HCT116 (cell line): ENCODE measurements at regions of chr10 and their contacts with region 1.

Region 1: GRCh38 chr10:23158370-23158769 is 33.7 kb upstream of the PTF1A start:
- DNase-seq: peak; percentile 47
- ATAC-seq: peak; percentile 92
- H3K4me3 ChIP-seq: no peak overlapping the region
- H3K27ac ChIP-seq: no peak overlapping the region
- H3K4me1 ChIP-seq: peaks cover 0 to 10% of the 10 kb centered on the region in 2 experiments; a peak in 2 of 4 replicates
- H3K27me3 ChIP-seq: peaks cover 4% of the 10 kb centered on the region; the same call in 1 of the 2 replicates
- CTCF ChIP-seq: peak; percentile 71 to 84 (median 83)
- POLR2A ChIP-seq: no peak
- RAD21 ChIP-seq: peak; percentile 85

Region 2: DNA sequence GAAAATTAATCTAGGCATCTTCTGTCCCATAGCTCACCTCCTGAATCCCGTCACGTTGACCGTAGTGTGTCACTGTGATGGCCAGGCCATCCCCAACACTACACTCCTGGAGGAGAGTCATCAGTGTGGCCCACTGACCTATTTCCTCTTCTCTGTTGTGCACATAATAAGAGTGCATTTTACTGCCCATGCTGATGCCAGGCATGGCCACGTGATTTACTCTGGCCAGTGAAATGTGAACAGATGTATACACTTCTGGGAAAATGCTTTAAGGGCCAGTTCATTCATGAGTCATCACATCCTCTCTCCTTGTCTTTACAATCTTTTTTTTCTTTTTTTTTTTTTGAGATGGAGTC is 342.1 kb before region 1 on chr10:
- CTCF ChIA-PET with region 1: no interaction called
- POLR2A ChIA-PET with region 1: no interaction called
- RAD21 ChIA-PET with region 1: no interaction called
- intact Hi-C with region 1: no loop called
- DNase-seq: peak; percentile 89
- ATAC-seq: peak; percentile 80
- H3K4me3 ChIP-seq: peak overlapping the region in 1 of 2 experiments; percentile 30; a peak in 2 of 4 replicates
- H3K27ac ChIP-seq: peak overlapping the region; percentile 85
- H3K4me1 ChIP-seq: peaks cover 19 to 38% of the 10 kb centered on the region in 2 experiments
- H3K27me3 ChIP-seq: no peaks in the 10 kb centered on the region
- CTCF ChIP-seq: no peak
- POLR2A ChIP-seq: no peak
- RAD21 ChIP-seq: no peak; the same call in 1 of the 2 replicates

Region 3: GRCh38 chr10:22900841-22901601 is 257.3 kb before region 1 on chr10:
- CTCF ChIA-PET with region 1: no interaction called
- POLR2A ChIA-PET with region 1: no interaction called
- RAD21 ChIA-PET with region 1: no interaction called
- intact Hi-C with region 1: no loop called
- DNase-seq: no peak
- ATAC-seq: no peak
- H3K4me3 ChIP-seq: no peak overlapping the region
- H3K27ac ChIP-seq: no peak overlapping the region
- H3K4me1 ChIP-seq: no peaks in the 10 kb centered on the region
- H3K27me3 ChIP-seq: no peaks in the 10 kb centered on the region
- CTCF ChIP-seq: no peak
- POLR2A ChIP-seq: no peak
- RAD21 ChIP-seq: no peak

Region 4: DNA sequence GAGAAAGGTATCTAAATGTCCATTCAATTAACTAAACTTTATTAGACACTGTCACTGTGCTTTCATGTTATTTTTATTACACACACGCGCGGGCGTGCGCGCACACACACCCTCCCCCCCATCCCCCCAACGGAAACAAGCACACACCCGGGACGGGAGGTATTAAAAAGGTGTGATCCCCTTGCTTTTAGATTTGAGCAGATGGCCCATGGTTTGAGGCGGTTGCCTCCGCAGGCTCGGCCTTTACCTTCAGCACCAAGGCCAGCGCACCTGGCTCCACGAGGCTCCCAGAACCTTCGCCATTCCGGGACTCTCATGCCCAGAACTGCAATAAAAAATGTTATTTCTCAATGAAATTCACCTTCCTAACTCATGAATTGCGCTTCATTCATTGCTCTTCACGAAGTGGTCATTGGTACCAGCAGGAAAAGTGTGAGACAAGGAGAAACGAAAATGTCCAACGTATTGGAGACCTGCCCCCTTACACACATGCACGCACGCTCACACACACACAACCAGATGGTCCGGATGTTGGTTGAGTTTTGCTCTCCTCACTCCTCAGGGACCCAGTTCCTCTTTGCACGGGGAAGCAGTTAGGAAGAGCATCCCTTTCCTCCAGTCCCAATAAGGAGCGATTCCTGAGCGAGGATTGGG is 13.0 kb after region 1 on chr10:
- CTCF ChIA-PET with region 1: interaction called, 10 read pairs
- POLR2A ChIA-PET with region 1: no interaction called
- RAD21 ChIA-PET with region 1: no interaction called
- intact Hi-C with region 1: no loop called
- DNase-seq: no peak
- ATAC-seq: no peak
- H3K4me3 ChIP-seq: no peak overlapping the region
- H3K27ac ChIP-seq: no peak overlapping the region
- H3K4me1 ChIP-seq: no peaks in the 10 kb centered on the region
- H3K27me3 ChIP-seq: peaks cover 21% of the 10 kb centered on the region
- CTCF ChIP-seq: no peak
- POLR2A ChIP-seq: no peak
- RAD21 ChIP-seq: no peak

Region 5: GRCh38 chr10:23314835-23315239 is 156.5 kb after region 1 on chr10:
- CTCF ChIA-PET with region 1: interaction called, 9 read pairs
- POLR2A ChIA-PET with region 1: no interaction called
- RAD21 ChIA-PET with region 1: interaction called in 1 of 2 experiments, 4 read pairs
- intact Hi-C with region 1: loop called (anchors 5 kb)
- DNase-seq: peak; percentile 57
- ATAC-seq: peak; percentile 63; the same call in 1 of the 2 replicates
- H3K4me3 ChIP-seq: no peak overlapping the region
- H3K27ac ChIP-seq: no peak overlapping the region
- H3K4me1 ChIP-seq: no peaks in the 10 kb centered on the region
- H3K27me3 ChIP-seq: peaks cover 15% of the 10 kb centered on the region
- CTCF ChIP-seq: peak; percentile 45 to 72 (median 66); a peak in 5 of 6 replicates
- POLR2A ChIP-seq: no peak
- RAD21 ChIP-seq: peak; percentile 80

Region 6: DNA sequence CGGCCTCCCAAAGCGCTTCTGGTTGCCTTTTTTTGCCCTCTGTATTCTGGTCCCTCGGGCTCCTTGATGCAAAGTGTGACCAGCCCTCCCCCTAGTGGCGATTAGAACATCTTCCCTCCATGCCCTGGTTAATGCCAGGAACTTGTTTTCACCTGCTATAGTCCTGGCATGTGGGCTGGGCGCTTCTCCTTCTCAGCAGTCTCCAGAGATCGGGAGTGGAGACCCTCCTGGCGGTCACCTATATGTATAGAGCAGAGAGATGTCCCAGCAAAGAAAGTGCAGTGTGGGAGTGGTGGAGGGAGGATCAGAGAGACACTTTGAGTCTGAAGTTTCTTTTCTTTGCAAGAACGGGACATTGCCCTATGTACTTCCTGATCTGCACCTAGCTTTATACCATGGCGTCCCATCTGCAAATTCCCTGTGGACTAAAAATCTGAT is 544.6 kb after region 1 on chr10:
- CTCF ChIA-PET with region 1: no interaction called
- POLR2A ChIA-PET with region 1: no interaction called
- RAD21 ChIA-PET with region 1: no interaction called
- intact Hi-C with region 1: loop called (anchors 1 kb)
- DNase-seq: peak; percentile 70
- ATAC-seq: peak; percentile 99
- H3K4me3 ChIP-seq: no peak overlapping the region
- H3K27ac ChIP-seq: no peak overlapping the region
- H3K4me1 ChIP-seq: no peaks in the 10 kb centered on the region
- H3K27me3 ChIP-seq: no peaks in the 10 kb centered on the region
- CTCF ChIP-seq: peak; percentile 65 to 73 (median 69)
- POLR2A ChIP-seq: no peak
- RAD21 ChIP-seq: peak; percentile 72

Region 7: DNA sequence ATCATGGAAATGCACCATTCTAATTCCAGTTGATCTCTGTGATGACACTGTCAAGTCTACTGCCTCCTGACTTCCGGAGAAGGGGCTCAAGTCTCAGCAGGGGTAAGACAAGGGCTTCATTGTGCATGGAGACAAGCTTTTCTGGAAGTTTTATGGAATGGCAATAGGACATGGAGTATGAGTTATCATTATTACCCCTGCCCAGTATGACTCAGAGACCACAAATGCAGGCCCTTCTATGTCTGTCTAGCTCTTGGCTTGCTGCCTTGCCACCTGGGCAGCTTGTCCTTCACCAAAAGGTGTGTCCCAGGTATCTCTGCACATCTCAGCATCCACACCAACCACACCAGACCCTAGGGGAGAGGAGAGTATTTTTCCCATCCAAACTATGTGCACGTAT is 1015.6 kb after region 1 on chr10:
- CTCF ChIA-PET with region 1: no interaction called
- POLR2A ChIA-PET with region 1: no interaction called
- RAD21 ChIA-PET with region 1: no interaction called
- intact Hi-C with region 1: no loop called
- DNase-seq: no peak
- ATAC-seq: no peak
- H3K4me3 ChIP-seq: no peak overlapping the region
- H3K27ac ChIP-seq: no peak overlapping the region
- H3K4me1 ChIP-seq: no peaks in the 10 kb centered on the region
- H3K27me3 ChIP-seq: no peaks in the 10 kb centered on the region
- CTCF ChIP-seq: no peak
- POLR2A ChIP-seq: no peak
- RAD21 ChIP-seq: no peak

Region 8: DNA sequence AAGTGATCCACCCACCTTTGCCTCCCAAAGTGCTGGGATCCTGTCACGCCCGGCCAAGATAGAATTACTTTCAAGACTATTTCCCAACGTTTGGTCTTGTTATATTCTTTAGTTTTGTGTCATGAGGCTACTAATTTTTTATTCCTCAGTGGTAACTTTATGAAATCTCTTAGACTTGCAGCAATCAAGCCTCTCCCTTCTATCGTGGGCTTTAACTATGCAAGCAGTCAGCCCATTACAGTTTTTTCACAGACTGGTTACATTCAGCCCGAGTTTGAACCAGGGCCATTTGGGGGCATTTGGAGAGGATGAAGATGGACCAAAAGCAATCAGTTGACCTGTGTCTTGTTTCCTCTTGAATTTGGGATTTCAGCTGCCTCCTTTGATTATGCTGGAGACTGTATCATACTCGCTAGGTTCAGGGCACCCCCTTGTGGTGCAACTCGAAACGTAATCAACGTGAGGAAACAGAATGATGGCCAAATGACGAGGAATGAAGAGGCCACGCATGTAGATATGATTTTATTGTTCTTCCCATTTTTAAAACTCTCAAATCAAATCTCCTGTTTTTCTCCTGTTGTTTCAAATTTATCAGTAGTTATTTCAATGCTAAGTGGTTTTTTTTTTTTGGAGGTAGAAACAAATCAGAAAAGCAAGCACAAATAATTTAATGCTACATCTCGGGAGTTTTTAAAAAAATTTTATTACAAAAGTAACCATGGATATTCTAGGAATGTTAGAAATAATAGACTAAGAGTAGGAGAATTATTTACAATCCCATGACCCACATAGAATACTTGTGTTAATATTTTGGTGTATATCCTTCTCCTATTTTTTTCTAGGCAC is 1202.1 kb after region 1 on chr10:
- CTCF ChIA-PET with region 1: no interaction called
- POLR2A ChIA-PET with region 1: no interaction called
- RAD21 ChIA-PET with region 1: no interaction called
- intact Hi-C with region 1: loop called (anchors 10 kb)
- DNase-seq: peak; percentile 47
- ATAC-seq: peak; percentile 91
- H3K4me3 ChIP-seq: no peak overlapping the region
- H3K27ac ChIP-seq: no peak overlapping the region
- H3K4me1 ChIP-seq: no peaks in the 10 kb centered on the region
- H3K27me3 ChIP-seq: no peaks in the 10 kb centered on the region
- CTCF ChIP-seq: peak; percentile 19 to 77 (median 71); a peak in 5 of 6 replicates
- POLR2A ChIP-seq: no peak
- RAD21 ChIP-seq: peak; percentile 64

Region 9: DNA sequence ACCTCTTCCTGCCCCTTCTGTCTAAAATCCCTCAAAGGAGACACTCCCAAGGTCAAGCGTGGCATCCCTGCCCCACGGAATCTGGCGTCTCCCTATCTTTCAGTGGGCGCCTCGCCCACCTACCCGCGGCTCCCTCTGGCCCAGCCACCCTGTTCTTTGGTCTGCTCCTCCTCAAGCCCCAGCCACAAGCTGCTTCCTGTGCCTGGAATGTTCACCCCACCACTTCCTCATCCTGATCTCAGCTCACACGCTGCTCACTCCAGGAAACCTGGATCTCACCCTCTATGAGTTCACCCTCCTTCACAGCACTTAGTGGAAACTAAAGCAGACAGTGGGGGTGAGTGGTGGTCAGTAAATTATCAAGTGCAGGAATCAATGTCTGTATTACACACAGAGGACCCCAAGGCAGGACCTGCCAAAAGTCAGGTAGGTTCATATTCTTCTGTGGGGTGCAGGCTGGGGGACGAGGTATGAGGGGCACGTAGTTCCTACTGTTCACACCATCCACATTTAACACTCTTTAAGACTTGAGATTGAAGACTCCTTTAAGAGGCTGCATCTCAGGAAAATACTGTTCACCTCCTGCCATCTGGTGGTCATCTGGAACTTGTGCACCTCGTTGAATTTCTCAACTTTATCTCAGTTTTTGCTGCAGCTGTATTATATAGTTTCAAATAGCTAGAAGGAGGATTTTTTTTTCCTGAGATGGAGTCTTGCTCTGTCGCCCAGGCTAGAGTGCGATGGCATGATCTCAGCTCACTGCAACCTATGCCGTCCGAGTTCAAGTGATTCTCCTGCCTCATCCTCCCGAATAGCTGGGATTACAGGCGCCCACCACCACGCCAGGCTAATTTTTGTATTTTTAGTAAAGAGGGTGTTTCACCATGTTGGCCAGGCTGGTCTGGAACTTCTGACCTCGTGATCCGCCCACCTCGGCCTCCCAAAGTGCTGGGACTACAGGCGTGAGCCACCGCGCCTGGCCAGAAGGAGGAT is 1398.7 kb after region 1 on chr10:
- CTCF ChIA-PET with region 1: interaction called, 3 read pairs
- POLR2A ChIA-PET with region 1: no interaction called
- RAD21 ChIA-PET with region 1: no interaction called
- intact Hi-C with region 1: loop called (anchors 2 kb)
- DNase-seq: peak; percentile 66
- ATAC-seq: peak; percentile 52
- H3K4me3 ChIP-seq: no peak overlapping the region
- H3K27ac ChIP-seq: no peak overlapping the region
- H3K4me1 ChIP-seq: peaks cover 4 to 18% of the 10 kb centered on the region in 2 experiments; a peak in 3 of 4 replicates
- H3K27me3 ChIP-seq: no peaks in the 10 kb centered on the region
- CTCF ChIP-seq: peak; percentile 57 to 78 (median 64); a peak in 5 of 6 replicates
- POLR2A ChIP-seq: no peak
- RAD21 ChIP-seq: peak; percentile 76